ENCODE measurements at regions of chr17 and their contacts with region 1.

Region 1: DNA sequence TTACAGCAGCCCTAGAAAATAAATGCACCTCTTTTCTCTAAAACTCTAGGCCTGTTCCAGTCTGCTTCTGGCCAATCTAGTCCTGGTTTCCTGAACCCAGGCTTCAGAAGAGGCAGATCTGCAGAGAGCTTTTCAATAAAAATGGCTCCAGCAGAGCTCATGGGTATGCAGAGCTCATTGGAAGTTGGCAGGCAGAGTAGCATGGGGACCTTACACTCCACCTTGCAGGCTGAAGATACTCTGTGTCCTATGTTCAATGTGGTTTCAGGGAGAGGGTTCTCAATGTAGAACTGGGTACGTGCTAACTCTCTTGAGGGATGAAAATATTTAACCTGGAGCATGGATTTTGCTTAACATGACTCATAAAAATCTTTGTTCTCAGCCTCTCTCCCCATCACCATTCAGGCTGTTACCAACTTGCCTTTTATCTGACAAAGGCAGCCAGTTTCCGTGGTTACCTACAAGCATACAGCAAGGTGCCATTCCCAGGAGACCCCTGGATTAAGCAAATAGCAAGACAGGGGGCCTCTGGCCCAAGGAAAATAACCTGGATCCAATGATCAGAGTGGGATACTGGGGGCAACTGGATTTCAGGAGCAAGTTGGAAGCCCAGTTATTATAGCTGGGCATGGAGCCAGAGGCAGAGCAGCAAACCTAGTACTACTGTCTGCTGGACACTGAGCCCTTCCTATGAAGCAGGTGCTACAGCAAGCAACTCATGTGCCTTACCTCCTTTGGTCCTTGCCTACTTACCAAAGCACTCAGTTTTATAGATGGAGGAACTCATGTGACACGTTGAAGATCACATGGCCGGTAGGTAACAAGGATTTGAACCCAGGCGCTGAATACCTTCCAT is 98.2 kb upstream of the DHX40 start:
- DNase-seq: no peak
- ATAC-seq: no peak
- H3K4me3 ChIP-seq: no peak overlapping the region
- H3K27ac ChIP-seq: no peak overlapping the region
- H3K4me1 ChIP-seq: no peaks in the 10 kb centered on the region
- H3K27me3 ChIP-seq: no peaks in the 10 kb centered on the region
- CTCF ChIP-seq: no peak

Region 2: GRCh38 chr17:59415397-59415796 is 51.8 kb before region 1 on chr17:
- CTCF ChIA-PET with region 1: no interaction called
- POLR2A ChIA-PET with region 1: no interaction called
- intact Hi-C with region 1: no loop called
- DNase-seq: no peak
- ATAC-seq: no peak
- H3K4me3 ChIP-seq: no peak overlapping the region
- H3K27ac ChIP-seq: no peak overlapping the region
- H3K4me1 ChIP-seq: no peaks in the 10 kb centered on the region
- H3K27me3 ChIP-seq: peaks cover 4% of the 10 kb centered on the region; the same call in 1 of the 2 replicates
- CTCF ChIP-seq: no peak

Region 3: DNA sequence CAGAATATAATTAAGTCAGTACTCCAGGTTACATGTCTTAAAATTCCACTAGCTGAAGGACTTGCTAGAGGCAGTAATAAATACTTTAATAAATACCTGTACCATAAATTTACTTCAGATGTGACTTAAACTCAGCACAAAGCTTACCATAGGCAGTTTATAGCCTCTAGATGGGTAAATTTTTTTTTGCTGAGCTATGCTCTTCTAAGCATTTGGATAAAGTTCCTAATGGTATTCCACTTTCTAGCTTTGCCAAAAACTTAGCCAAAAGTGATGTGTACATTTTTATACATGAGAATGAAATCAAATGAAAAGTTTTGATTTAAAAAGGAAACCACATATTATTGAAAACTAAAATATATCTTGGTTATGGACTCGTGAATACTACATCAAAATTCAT is 34.5 kb after region 1 on chr17:
- CTCF ChIA-PET with region 1: no interaction called
- POLR2A ChIA-PET with region 1: interaction called, 13 read pairs
- intact Hi-C with region 1: no loop called
- DNase-seq: no peak
- ATAC-seq: no peak
- H3K4me3 ChIP-seq: no peak overlapping the region
- H3K27ac ChIP-seq: no peak overlapping the region
- H3K4me1 ChIP-seq: no peaks in the 10 kb centered on the region
- H3K27me3 ChIP-seq: peaks cover 8% of the 10 kb centered on the region; the same call in 1 of the 2 replicates
- CTCF ChIP-seq: no peak

Measured in PC-3 (cell line).